SK-N-SH (cell line): ENCODE measurements at regions of chr6 and their contacts with region 1.

Region 1: DNA sequence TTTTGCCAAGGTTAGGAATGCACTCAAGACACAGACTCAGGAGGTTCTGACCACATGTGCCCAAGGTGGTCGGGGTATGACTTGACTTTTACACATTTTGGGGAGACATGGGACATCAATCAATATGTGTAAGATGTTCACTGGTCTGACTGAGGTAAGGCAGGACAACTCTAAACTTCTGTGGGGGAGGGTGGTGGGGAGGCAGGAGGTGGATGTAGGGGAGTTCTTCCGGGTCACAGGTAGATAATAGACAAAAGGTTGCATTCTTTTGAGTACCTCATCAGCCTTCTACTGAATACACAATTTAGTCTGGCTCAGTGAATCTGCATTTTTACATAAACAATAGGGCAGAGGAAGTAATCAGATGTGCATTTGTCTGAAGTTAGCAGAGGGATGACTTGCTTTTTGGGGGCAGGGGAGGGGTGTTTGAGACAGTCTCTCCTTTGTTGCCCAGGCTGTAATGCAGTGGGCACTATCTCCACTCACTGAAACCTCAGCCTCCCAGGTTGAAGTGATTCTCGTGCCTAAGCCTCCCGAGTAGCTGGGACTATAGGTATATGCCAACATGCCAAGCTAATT is 10.9 kb downstream of the ECHDC1 start:
- DNase-seq: no peak
- H3K4me3 ChIP-seq: no peak overlapping the region
- H3K27ac ChIP-seq: no peak overlapping the region
- H3K4me1 ChIP-seq: no peaks in the 10 kb centered on the region; a peak in 1 of 4 replicates
- H3K27me3 ChIP-seq: no peaks in the 10 kb centered on the region
- CTCF ChIP-seq: no peak
- EP300 ChIP-seq: no peak
- RAD21 ChIP-seq: no peak

Region 2: DNA sequence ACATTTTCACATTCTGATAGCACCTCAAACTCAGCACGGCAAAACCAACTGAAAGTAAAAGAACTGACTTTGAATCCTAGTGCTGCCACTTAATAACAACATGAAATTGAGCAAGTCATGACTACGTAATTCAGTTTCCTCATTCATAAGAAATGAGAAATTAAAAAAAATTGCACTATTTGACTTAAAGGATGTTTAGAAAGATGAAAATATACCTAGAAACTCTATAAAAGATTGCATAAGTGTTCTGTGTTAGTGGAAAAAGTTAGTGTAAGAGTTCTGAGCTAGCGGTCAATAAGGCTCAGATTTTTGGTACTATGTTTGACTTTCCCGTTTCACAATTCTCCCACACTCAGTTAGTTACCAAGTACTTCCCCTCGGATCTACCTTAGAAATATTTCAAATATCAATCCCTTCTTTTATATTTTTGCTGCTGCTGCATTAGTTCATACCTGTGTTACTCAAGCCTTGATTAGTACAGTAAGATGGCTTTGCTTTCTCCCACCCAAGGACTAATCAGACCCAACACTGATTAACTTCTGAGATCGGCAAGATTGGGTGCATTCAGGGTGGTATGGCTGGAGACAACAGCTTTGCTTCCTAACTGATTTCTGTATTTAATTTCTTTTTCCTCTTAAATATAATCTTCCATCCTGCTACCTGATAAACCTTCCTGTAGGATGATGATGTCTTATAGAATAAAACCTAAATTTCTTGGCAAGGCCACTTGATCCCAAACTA is 14.9 kb before region 1 on chr6:
- CTCF ChIA-PET with region 1: interaction called, 11 read pairs
- POLR2A ChIA-PET with region 1: no interaction called
- DNase-seq: no peak
- H3K4me3 ChIP-seq: no peak overlapping the region
- H3K27ac ChIP-seq: no peak overlapping the region
- H3K4me1 ChIP-seq: no peaks in the 10 kb centered on the region; a peak in 1 of 4 replicates
- H3K27me3 ChIP-seq: no peaks in the 10 kb centered on the region
- CTCF ChIP-seq: no peak
- EP300 ChIP-seq: no peak
- RAD21 ChIP-seq: no peak

Region 3: GRCh38 chr6:127533011-127533410 is 200.5 kb after region 1 on chr6:
- CTCF ChIA-PET with region 1: no interaction called
- POLR2A ChIA-PET with region 1: no interaction called
- DNase-seq: no peak
- H3K4me3 ChIP-seq: no peak overlapping the region
- H3K27ac ChIP-seq: no peak overlapping the region
- H3K4me1 ChIP-seq: no peaks in the 10 kb centered on the region
- H3K27me3 ChIP-seq: peaks cover 7% of the 10 kb centered on the region; the same call in 1 of the 2 replicates
- CTCF ChIP-seq: no peak
- EP300 ChIP-seq: no peak
- RAD21 ChIP-seq: no peak